ENCODE measurements at regions of chr16 and their contacts with region 1.

Region 1: GRCh38 chr16:47141773-47142485 is 1.8 kb downstream of the NETO2 start:
- DNase-seq: peak; percentile 92
- H3K4me3 ChIP-seq: peak overlapping the region; percentile 68 to 78 (median 71)
- H3K27ac ChIP-seq: peak overlapping the region; percentile 70
- H3K4me1 ChIP-seq: peaks cover 30% of the 10 kb centered on the region
- H3K27me3 ChIP-seq: no peaks in the 10 kb centered on the region
- CTCF ChIP-seq: peak; percentile 98 to 99

Region 2: GRCh38 chr16:46853713-46854443 is 288.1 kb before region 1 on chr16:
- CTCF ChIA-PET with region 1: interaction called, 4 read pairs
- dilution Hi-C with region 1: no loop called
- in situ Hi-C with region 1: no loop called
- intact Hi-C with region 1: loop called (anchors 2 kb)
- DNase-seq: peak; percentile 49
- H3K4me3 ChIP-seq: no peak overlapping the region
- H3K27ac ChIP-seq: no peak overlapping the region
- H3K4me1 ChIP-seq: no peaks in the 10 kb centered on the region
- H3K27me3 ChIP-seq: no peaks in the 10 kb centered on the region
- CTCF ChIP-seq: peak; percentile 88 to 94

Region 3: GRCh38 chr16:47037746-47038458 is 104.0 kb before region 1 on chr16:
- CTCF ChIA-PET with region 1: interaction called, 6 read pairs
- dilution Hi-C with region 1: no loop called
- in situ Hi-C with region 1: no loop called
- intact Hi-C with region 1: loop called (anchors 1 kb)
- DNase-seq: peak; percentile 68
- H3K4me3 ChIP-seq: peak overlapping the region; percentile 63 to 80 (median 70)
- H3K27ac ChIP-seq: peak overlapping the region; percentile 26
- H3K4me1 ChIP-seq: peaks cover 4% of the 10 kb centered on the region
- H3K27me3 ChIP-seq: no peaks in the 10 kb centered on the region
- CTCF ChIP-seq: peak; percentile 76 to 94

Region 4: DNA sequence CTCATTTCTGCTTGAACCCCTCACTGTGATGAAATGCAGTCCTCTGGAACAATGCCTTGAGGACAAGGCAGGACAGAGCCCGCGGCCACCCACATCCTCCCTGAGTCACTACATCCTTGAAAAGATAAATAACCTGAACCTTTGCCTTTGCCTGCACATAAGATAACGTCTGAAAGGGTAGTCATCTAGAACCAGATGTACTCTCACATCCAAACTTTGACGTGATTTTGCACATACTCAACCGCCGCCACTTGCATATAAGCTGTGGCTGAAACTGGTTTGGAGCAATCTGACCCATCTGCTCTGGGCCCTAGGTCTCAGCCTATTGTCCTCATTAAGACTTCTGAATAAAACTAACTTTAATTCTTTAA is 571.3 kb after region 1 on chr16:
- CTCF ChIA-PET with region 1: interaction called, 6 read pairs
- dilution Hi-C with region 1: no loop called
- in situ Hi-C with region 1: no loop called
- intact Hi-C with region 1: loop called (anchors 5 kb)
- DNase-seq: peak; percentile 93
- H3K4me3 ChIP-seq: no peak overlapping the region
- H3K27ac ChIP-seq: peak overlapping the region; percentile 78
- H3K4me1 ChIP-seq: peaks cover 28% of the 10 kb centered on the region
- H3K27me3 ChIP-seq: no peaks in the 10 kb centered on the region
- CTCF ChIP-seq: no peak

Region 5: GRCh38 chr16:48113471-48113870 is 971.5 kb after region 1 on chr16:
- CTCF ChIA-PET with region 1: no interaction called
- dilution Hi-C with region 1: no loop called
- in situ Hi-C with region 1: no loop called
- intact Hi-C with region 1: loop called (anchors 2 kb)
- DNase-seq: no peak
- H3K4me3 ChIP-seq: no peak overlapping the region
- H3K27ac ChIP-seq: no peak overlapping the region
- H3K4me1 ChIP-seq: no peaks in the 10 kb centered on the region
- H3K27me3 ChIP-seq: no peaks in the 10 kb centered on the region
- CTCF ChIP-seq: peak; percentile 20 to 50

Region 6: GRCh38 chr16:48318630-48319029 is 1176.7 kb after region 1 on chr16:
- CTCF ChIA-PET with region 1: interaction called, 10 read pairs
- dilution Hi-C with region 1: no loop called
- in situ Hi-C with region 1: no loop called
- intact Hi-C with region 1: no loop called
- DNase-seq: no peak
- H3K4me3 ChIP-seq: no peak overlapping the region
- H3K27ac ChIP-seq: no peak overlapping the region
- H3K4me1 ChIP-seq: peaks cover 7% of the 10 kb centered on the region
- H3K27me3 ChIP-seq: no peaks in the 10 kb centered on the region
- CTCF ChIP-seq: no peak

Measured in mammary epithelial cell (primary cell).